ENCODE measurements at regions of chr6 and their contacts with region 1.

Region 1: GRCh38 chr6:120608826-120609225 is 725.5 kb downstream of the TBC1D32 start:
- DNase-seq: no peak

Region 2: GRCh38 chr6:122214605-122215318 is 1605.9 kb after region 1 on chr6:
- intact Hi-C with region 1: loop called in 1 of 2 experiments (anchors 5 kb)
- DNase-seq: no peak

Measured in posterior vena cava (tissue), 2 donors.